ENCODE measurements at regions of chr20 and their contacts with region 1.

Region 1: GRCh38 chr20:25865380-25866118 is 168.9 kb upstream of the ZNF337 start:
- DNase-seq: peak; percentile 65
- H3K4me3 ChIP-seq: peak overlapping the region; percentile 24 to 45 (median 40)
- H3K27ac ChIP-seq: no peak overlapping the region
- H3K4me1 ChIP-seq: peaks cover 20% of the 10 kb centered on the region
- H3K27me3 ChIP-seq: no peaks in the 10 kb centered on the region
- CTCF ChIP-seq: no peak

Region 2: DNA sequence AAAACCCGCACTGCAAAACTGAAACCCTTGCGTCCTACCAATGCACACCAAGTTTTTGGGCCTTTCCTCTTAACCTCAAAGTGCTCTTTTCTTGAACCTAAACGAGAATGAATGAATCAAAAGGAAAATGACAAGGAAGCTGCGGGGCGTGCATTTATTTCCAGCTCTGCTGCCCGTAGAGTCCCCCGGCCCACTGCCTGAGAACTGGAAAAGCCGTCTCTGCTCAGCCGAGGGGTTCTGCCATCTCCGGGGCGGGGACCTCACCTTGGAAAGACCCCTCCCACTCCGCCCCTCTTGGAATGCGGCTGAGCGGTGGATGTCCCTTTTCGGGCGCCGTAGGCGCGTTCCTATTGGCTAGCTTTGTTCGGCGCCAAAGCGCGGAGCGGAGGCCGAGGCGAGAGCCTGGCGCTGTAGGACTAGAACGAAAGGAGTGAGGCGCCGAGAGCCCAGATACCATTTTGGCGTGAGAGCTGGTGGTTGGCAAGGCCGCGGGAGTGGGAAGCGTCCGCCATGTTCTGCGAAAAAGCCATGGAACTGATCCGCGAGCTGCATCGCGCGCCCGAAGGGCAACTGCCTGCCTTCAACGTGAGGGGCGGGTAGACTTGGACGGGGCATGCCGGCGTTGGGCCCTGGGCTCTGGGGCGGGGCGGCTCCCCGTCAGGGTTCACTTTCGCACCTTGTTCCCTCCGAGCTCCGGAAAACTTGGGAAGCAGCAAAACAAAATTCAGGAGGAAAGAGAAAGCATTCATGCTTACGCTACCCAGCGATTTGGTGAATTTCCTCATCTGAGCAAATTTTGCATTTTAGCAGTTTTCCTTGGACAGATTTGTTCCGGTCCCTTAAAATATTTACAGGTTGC is 458.0 kb before region 1 on chr20 and contains the start of gene GINS1:
- CTCF ChIA-PET with region 1: no interaction called
- dilution Hi-C with region 1: no loop called
- in situ Hi-C with region 1: loop called in 1 of 2 experiments (anchors 25 kb)
- intact Hi-C with region 1: no loop called
- DNase-seq: peak; percentile 89
- H3K4me3 ChIP-seq: peak within 1 kb of the TSS; percentile 77 to 82 (median 78)
- H3K27ac ChIP-seq: peak within 1 kb of the TSS; percentile 73
- H3K4me1 ChIP-seq: peaks cover 11% of the 10 kb centered on the region
- H3K27me3 ChIP-seq: no peaks in the 10 kb centered on the region
- CTCF ChIP-seq: no peak
- total RNA-seq, gene GINS1: 5.7 to 16.8 TPM

Region 3: DNA sequence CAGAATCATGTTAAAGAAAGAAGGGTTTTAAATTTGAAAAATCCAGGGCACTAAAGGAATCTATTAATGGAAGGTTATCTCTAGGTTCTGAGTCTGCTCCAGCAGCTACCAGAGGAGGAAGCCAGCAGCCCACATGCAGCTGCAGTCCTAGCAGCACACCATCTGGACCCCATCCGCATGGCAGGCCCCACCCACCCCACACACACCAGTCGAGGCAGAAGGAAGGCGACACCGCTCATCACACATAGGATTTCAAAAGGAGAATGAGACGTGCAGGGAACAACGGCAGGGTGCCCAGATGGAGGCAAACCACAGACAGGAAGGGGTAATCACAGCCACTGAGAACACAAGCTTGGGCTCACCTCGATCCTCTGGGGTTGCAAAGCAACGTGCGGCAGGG is 379.2 kb before region 1 on chr20:
- CTCF ChIA-PET with region 1: no interaction called
- dilution Hi-C with region 1: no loop called
- in situ Hi-C with region 1: loop called in 1 of 2 experiments (anchors 25 kb)
- intact Hi-C with region 1: no loop called
- DNase-seq: no peak
- H3K4me3 ChIP-seq: no peak overlapping the region
- H3K27ac ChIP-seq: no peak overlapping the region
- H3K4me1 ChIP-seq: peaks cover 45% of the 10 kb centered on the region
- H3K27me3 ChIP-seq: no peaks in the 10 kb centered on the region
- CTCF ChIP-seq: no peak

Measured in mammary epithelial cell (primary cell).